ENCODE measurements at regions of chr2 and their contacts with region 1.

Region 1: GRCh38 chr2:88857951-88858411 is 166.5 kb downstream of the RPIA start:
- DNase-seq: no peak
- ATAC-seq: no peak
- H3K4me3 Mint-ChIP-seq: no peak overlapping the region
- H3K27ac Mint-ChIP-seq: no peak overlapping the region
- H3K4me1 Mint-ChIP-seq: no peaks in the 10 kb centered on the region
- H3K27me3 Mint-ChIP-seq: peaks cover 8% of the 10 kb centered on the region
- CTCF ChIP-seq: no peak

Region 2: DNA sequence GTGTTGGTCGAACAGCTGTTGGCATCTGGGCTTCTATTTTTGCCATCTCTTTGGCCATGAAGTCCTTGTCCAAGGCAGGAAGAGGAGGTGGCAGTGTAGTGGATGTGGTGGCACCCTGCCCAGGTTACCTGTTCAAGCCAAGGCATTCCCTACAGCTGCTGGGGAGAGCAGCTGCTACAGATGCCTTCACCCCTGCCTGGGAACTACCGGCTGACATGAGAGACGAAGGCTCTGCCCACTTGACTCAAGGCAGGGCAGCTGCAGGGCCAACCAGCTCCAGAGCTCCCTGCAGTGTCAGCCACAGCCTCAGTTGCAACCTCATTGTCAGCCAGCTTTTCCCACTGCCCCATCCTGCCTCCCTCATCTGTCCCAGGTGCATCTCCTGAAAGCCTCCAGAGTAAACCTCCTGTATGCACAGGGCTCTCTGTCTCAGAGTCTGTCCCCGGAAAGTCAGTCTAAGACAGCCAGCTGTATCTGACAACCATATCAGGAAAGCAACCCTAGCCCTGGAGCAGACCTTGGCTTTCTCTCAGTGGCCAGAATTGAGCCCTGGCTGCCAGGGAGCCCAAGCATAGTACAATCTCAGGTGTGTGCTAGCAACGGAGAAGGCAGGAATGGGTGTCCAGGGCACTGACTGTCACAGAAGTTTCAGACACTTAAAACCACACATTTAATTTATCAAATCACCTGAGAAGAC is 50.6 kb before region 1 on chr2:
- CTCF ChIA-PET with region 1: no interaction called
- POLR2A ChIA-PET with region 1: no interaction called
- intact Hi-C with region 1: no loop called
- DNase-seq: no peak
- ATAC-seq: no peak
- H3K4me3 Mint-ChIP-seq: no peak overlapping the region
- H3K27ac Mint-ChIP-seq: no peak overlapping the region
- H3K4me1 Mint-ChIP-seq: no peaks in the 10 kb centered on the region
- H3K27me3 Mint-ChIP-seq: no peaks in the 10 kb centered on the region
- CTCF ChIP-seq: no peak

Region 3: DNA sequence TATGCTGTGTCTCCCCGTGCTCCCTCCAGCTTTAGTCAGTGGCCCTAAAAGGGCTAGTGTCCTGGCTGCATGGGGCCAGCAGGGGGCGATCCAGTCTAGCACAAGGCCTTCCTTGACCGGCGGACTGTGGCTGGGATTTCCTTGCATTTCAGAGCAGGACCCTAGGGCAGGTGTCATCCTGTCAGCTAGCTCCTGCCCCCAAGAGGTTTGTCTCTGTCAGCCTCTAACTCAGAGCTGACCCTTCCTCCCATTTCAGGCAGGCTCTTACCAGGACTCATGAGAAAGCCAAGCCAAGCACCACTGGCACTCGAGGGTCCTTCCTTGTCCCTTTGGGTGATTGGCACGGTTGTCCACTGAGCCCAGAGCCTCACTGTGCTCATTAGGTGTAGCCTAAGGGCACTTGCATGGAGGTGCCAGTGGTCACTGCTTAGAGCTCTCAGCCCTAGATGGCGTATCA is 26.2 kb before region 1 on chr2:
- CTCF ChIA-PET with region 1: interaction called, 13 read pairs
- POLR2A ChIA-PET with region 1: no interaction called
- intact Hi-C with region 1: no loop called
- DNase-seq: peak; percentile 76
- ATAC-seq: peak; percentile 74
- H3K4me3 Mint-ChIP-seq: no peak overlapping the region
- H3K27ac Mint-ChIP-seq: no peak overlapping the region
- H3K4me1 Mint-ChIP-seq: no peaks in the 10 kb centered on the region
- H3K27me3 Mint-ChIP-seq: peaks cover 8% of the 10 kb centered on the region
- CTCF ChIP-seq: peak; percentile 74

Region 4: GRCh38 chr2:88874063-88874657 is 16.2 kb after region 1 on chr2:
- CTCF ChIA-PET with region 1: interaction called, 16 read pairs
- POLR2A ChIA-PET with region 1: no interaction called
- intact Hi-C with region 1: no loop called
- DNase-seq: peak; percentile 63
- ATAC-seq: peak; percentile 74
- H3K4me3 Mint-ChIP-seq: no peak overlapping the region
- H3K27ac Mint-ChIP-seq: no peak overlapping the region
- H3K4me1 Mint-ChIP-seq: no peaks in the 10 kb centered on the region
- H3K27me3 Mint-ChIP-seq: peaks cover 12% of the 10 kb centered on the region
- CTCF ChIP-seq: peak; percentile 67

Region 5: GRCh38 chr2:88919087-88919738 is 61.2 kb after region 1 on chr2:
- CTCF ChIA-PET with region 1: no interaction called
- POLR2A ChIA-PET with region 1: no interaction called
- intact Hi-C with region 1: no loop called
- DNase-seq: peak; percentile 13
- ATAC-seq: no peak
- H3K4me3 Mint-ChIP-seq: no peak overlapping the region
- H3K27ac Mint-ChIP-seq: no peak overlapping the region
- H3K4me1 Mint-ChIP-seq: no peaks in the 10 kb centered on the region
- H3K27me3 Mint-ChIP-seq: peaks cover 5% of the 10 kb centered on the region
- CTCF ChIP-seq: peak; percentile 41